ENCODE measurements at regions of chr10 and their contacts with region 1.

Region 1: DNA sequence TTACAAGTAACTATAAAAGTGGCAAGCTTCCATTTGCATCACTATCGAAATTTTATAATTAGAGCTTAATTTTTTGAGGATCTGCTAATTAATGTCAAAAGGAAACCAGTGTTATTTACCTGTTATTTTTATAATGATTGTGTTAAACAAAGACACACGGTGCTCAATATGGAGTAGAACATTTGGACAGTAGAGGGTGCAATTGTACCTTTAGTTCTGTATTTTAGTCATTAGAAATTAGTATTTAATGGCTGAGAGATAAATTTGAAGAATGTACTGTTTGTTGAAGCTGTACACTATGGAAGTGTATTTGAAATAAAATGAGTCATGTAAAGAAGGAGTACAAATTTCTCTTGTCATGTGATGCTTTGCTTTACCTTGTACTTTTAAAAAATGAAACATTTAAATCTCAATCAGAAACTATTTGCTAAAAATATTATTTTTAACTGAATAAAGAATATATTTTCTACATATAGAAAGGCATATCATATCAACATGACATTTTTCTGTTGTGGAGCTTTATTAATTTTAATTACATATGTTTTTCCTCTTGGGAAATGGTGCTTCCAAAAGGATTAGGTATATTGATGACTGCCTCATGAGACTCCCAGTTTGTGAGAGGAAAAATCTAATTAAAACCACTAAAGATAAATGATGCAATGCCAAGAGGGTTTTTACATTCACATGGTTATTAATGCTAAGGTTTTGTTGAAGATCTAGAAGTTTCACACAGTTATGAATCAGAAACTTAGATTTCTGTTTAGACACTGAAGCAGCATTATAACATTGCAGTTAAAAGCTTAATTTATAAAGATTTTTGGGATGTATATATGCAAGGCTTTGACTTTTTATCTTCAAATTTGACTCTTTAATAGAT is 10.4 kb upstream of the PRKG1 start:
- DNase-seq: no peak
- H3K4me3 Mint-ChIP-seq: no peak overlapping the region
- H3K27ac Mint-ChIP-seq: no peak overlapping the region
- H3K4me1 Mint-ChIP-seq: no peaks in the 10 kb centered on the region
- H3K27me3 Mint-ChIP-seq: peaks cover 3% of the 10 kb centered on the region

Region 2: DNA sequence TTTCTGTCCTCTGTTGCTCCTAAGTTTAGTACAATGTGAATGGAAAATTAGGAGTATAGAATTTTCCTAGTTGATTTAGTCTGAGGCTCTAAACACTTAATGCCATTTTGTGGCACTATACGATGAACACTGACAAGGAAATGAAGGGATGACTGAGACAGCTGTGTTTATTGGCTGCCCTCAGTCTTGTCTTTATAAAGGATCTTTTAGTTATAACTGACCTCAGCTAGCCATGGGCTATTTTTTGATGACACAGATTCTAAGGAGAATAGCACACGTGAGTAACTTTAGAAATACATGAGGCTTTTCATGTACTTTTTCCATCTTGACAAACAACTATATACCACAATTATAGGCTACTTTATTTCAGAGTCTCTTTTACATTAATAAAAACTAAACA is 124.1 kb after region 1 on chr10:
- CTCF ChIA-PET with region 1: no interaction called
- intact Hi-C with region 1: no loop called
- DNase-seq: no peak
- H3K4me3 Mint-ChIP-seq: no peak overlapping the region
- H3K27ac Mint-ChIP-seq: no peak overlapping the region
- H3K4me1 Mint-ChIP-seq: no peaks in the 10 kb centered on the region
- H3K27me3 Mint-ChIP-seq: no peaks in the 10 kb centered on the region

Region 3: DNA sequence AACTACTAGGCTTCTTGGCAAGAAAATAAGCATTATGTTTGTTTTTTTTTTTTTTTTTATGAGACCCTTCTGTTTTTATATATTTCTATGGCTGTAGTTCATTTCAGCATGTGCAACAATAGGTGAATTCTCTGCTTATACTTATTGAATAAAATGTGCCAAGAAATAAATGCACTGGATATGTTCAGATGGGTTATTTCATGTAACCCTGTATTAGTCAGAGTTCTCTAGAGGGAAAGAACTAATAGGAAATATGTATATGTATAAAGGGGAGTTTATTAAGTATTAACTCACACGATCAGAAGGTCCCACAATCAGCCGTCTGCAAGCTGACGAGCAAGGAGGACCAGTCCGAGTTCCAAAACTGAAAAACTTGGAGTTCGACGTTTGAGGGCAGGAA is 342.7 kb after region 1 on chr10:
- CTCF ChIA-PET with region 1: no interaction called
- intact Hi-C with region 1: no loop called
- DNase-seq: no peak
- H3K4me3 Mint-ChIP-seq: no peak overlapping the region
- H3K27ac Mint-ChIP-seq: no peak overlapping the region
- H3K4me1 Mint-ChIP-seq: no peaks in the 10 kb centered on the region
- H3K27me3 Mint-ChIP-seq: no peaks in the 10 kb centered on the region

Region 4: GRCh38 chr10:51422311-51423120 is 358.6 kb after region 1 on chr10:
- CTCF ChIA-PET with region 1: no interaction called
- intact Hi-C with region 1: loop called (anchors 5 kb)
- DNase-seq: peak; percentile 52
- H3K4me3 Mint-ChIP-seq: no peak overlapping the region
- H3K27ac Mint-ChIP-seq: no peak overlapping the region
- H3K4me1 Mint-ChIP-seq: no peaks in the 10 kb centered on the region
- H3K27me3 Mint-ChIP-seq: peaks cover 11% of the 10 kb centered on the region

Region 5: DNA sequence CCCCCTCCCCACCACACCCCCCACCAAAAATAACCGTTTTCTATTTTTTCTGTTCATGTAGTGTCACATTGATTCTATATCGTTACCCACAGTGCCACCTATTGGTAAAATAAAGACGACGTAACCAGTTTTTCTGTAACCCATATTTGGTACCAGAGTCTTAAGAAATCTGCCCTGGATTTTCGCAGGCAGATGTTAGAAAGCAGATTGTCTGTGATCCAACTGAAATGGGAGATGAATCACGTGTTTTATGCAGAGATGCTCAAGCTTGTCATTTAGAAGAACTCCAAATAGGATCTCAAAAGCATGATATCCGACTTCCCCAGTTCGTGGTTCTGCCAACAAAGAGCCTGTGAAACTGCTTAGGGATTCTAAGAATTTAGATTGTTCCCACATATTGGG is 896.6 kb after region 1 on chr10:
- CTCF ChIA-PET with region 1: interaction called, 3 read pairs
- intact Hi-C with region 1: loop called (anchors 5 kb)
- DNase-seq: no peak
- H3K4me3 Mint-ChIP-seq: no peak overlapping the region
- H3K27ac Mint-ChIP-seq: no peak overlapping the region
- H3K4me1 Mint-ChIP-seq: no peaks in the 10 kb centered on the region
- H3K27me3 Mint-ChIP-seq: peaks cover 16% of the 10 kb centered on the region

Region 6: DNA sequence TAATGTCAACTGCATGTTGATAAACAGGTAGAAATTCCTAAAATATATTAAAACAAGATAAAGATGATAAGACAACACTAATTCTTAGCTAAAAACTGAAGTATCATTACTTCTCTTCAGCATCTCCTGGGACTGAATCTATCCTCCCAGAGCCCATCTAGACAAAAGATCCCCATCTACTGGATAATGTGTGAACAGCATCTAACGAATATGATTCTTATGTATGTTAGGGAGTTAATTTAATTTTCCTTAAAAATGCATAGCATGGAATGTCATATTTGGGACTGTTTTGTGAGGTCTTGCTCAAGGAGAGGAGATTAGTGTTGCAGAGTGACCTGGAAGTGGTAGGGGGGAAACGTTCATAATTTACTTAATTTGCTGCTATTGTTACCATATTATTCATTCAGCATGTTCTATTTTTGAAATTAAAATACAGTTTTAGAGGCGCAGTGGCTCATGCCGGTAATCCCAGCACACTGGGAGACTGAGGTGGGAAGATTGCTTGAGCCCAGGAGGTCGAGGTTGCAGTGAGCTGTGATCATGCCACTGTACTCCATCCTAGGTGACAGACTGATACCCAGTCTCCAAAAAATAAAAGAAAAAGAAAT is 940.5 kb after region 1 on chr10:
- CTCF ChIA-PET with region 1: no interaction called
- intact Hi-C with region 1: loop called (anchors 10 kb)
- DNase-seq: no peak
- H3K4me3 Mint-ChIP-seq: no peak overlapping the region
- H3K27ac Mint-ChIP-seq: no peak overlapping the region
- H3K4me1 Mint-ChIP-seq: no peaks in the 10 kb centered on the region
- H3K27me3 Mint-ChIP-seq: peaks cover 3% of the 10 kb centered on the region

Measured in activated naive CD4-positive, alpha-beta T cell treated with anti-CD3 and anti-CD28 coated beads for 36 hours (primary cell).